Astrocyte of the cerebellum (primary cell): ENCODE measurements at regions of chr17 and their contacts with region 1.

Region 1: DNA sequence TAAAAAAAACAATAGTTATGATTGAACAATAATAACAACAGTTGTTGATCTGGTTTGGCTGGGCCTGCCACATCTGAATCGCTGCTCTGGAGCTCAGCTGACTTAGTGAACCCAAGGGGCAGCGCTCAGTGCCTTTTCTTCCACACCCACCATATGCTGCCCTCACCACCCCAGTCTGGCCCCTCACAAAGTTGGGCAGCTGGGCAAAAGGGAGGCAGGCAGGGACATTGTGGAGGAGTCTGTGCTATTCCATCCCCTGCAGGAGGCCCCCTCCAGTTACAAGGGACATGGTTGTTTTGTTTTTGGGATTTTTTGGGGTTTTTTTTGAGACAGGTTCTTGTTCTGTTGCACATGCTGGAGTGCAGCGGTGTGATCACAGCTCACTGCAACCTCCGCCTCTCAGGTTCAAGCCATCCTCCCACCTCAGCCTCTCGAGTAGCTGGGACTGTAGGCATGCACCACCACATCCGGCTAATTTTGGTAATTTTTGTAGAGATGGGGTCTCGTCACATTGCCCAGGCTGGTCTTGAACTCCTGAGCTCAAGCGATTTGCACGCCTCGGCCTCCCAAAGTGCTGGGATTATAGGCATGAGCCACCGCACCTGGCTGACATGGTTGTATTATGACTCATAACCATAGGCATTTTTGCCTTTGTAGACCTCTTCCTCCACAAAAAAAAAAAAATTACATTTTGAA is 8.6 kb upstream of the PECAM1 start:
- DNase-seq: peak; percentile 35
- H3K4me3 ChIP-seq: no peak overlapping the region
- CTCF ChIP-seq: no peak

Region 2: GRCh38 chr17:64326395-64327054 is 72.7 kb before region 1 on chr17:
- in situ Hi-C with region 1: loop called (anchors 5 kb)
- DNase-seq: no peak
- H3K4me3 ChIP-seq: no peak overlapping the region
- CTCF ChIP-seq: no peak

Region 3: GRCh38 chr17:64470625-64471024 is 71.4 kb after region 1 on chr17:
- in situ Hi-C with region 1: no loop called
- DNase-seq: no peak
- H3K4me3 ChIP-seq: no peak overlapping the region
- CTCF ChIP-seq: no peak